Left cardiac atrium (tissue), 4 donors: ENCODE measurements at regions of chr4 and their contacts with region 1.

Region 1: DNA sequence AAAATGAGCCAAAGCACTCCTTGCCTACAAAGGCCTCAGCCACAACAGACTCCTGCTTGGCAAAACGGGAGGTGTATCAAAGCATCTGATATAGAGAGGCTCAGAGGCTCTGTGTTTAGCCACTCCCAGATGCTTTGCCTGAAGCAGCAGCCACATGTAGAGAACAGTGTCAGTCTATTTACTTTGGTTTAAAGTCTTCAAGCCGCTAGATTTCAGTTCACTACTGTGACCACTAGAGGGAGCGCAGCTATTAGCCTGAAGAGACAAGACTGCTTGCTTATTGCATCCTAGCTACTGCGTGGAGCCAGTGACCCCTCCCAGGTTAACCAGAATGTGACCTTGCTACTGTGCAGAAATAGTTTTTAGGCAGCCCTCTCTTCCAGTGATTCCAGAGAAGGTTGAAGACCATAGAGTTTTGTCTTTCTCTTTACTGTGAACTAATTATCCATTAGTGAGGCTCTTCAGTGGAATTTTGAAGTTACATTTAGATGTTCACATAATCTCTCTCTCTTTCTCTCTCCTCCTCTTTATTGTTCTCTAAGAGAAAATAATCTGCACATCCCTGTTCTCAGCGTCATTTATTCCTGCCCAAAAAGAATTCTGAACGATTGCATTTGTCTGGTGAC is 39.3 kb downstream of the BMP3 start:
- DNase-seq: peak; percentile 44
- ATAC-seq: peak; percentile 82 to 85

Region 2: DNA sequence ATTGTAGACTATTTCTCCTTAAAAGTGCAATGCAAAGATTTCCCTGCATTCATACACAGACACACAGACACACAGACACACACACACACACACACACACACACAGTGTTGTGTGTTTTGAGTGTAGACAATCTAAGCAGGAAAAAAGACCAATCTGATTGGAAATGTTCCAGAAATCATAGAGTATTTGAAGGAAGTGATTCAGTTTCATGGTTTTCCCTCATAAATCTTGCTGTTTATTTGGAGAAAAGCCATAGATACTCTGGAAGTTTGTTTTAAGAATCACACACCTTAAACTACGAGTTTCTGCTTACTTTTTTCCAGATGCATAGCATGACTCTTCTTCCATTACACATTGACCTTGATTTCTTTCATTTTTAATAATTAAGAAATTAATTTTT is 337.8 kb before region 1 on chr4:
- intact Hi-C with region 1: no loop called
- DNase-seq: no peak
- ATAC-seq: no peak

Region 3: GRCh38 chr4:81260443-81261101 is 190.8 kb after region 1 on chr4:
- intact Hi-C with region 1: loop called in 1 of 2 experiments (anchors 10 kb)
- DNase-seq: no peak
- ATAC-seq: no peak

Region 4: DNA sequence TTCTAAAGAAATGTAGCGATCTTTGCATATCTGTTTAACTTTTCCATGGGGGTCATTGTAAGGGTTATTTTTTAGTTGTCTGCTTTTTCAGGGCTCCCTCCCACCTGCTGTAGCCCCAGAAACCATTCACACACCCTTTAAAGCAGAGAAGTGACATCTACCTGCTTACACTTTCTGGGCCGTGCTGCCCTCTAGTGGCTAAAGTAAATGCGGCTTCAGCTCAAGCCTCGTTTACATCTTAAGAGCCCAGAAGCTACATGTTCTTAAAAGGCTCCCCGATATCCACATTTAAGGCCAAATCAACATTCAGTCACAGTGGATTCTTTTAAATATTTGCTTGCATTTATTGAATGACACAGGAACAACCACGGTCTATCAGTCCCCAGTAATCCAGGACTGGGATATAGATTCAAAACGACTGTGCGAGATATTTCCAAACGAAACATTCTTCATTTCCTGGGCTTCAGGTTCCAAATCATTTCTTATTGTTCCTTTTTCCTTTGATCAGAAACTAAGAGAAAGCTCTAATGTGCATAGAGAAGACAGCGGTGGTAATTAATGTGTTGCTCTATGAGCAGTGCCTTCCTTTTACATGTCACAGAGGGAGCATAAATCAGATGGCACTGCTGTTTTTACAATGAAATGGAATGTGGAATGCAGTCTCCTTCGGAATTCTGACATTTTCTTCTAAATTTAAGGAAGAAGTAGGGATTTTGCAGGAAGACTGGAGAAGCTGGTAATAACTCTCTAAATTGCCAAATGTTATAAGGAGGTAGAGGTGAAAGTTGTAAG is 282.0 kb after region 1 on chr4:
- intact Hi-C with region 1: loop called in 1 of 2 experiments (anchors 2 kb)
- DNase-seq: peak; percentile 66
- ATAC-seq: peak; percentile 61 to 71